RWPE1 (cell line): ENCODE measurements at regions of chr5 and their contacts with region 1.

Region 1: GRCh38 chr5:65412842-65413241 is 68.9 kb downstream of the ADAMTS6 start:
- DNase-seq: no peak
- H3K27ac ChIP-seq: no peak overlapping the region
- CTCF ChIP-seq: no peak

Region 2: GRCh38 chr5:65440456-65440855 is 27.6 kb after region 1 on chr5:
- CTCF ChIA-PET with region 1: interaction called, 10 read pairs
- POLR2A ChIA-PET with region 1: no interaction called
- DNase-seq: no peak
- H3K27ac ChIP-seq: no peak overlapping the region
- CTCF ChIP-seq: no peak

Region 3: GRCh38 chr5:65468633-65469032 is 55.8 kb after region 1 on chr5:
- CTCF ChIA-PET with region 1: no interaction called
- POLR2A ChIA-PET with region 1: no interaction called
- DNase-seq: no peak
- H3K27ac ChIP-seq: no peak overlapping the region
- CTCF ChIP-seq: no peak

Region 4: DNA sequence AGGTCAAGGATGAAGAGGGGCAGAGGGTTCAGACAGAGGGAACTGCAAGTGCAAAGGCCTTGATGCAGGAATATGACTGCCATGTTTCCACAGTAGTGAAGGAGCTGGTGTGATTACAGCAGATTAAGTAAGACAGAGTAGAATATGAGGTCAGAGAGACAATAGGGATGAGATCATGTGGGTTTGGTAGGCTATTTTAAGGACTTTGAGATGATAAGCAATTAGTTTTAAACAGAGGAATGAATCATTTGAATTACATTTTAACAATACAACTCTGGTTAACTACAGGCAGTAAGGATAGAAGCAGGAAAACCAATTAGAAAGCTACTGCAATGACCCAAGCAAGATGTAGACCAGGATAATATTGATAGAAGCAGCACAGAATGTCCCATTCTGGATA is 142.4 kb after region 1 on chr5:
- CTCF ChIA-PET with region 1: no interaction called
- POLR2A ChIA-PET with region 1: no interaction called
- DNase-seq: no peak
- H3K27ac ChIP-seq: no peak overlapping the region
- CTCF ChIP-seq: no peak